Sciatic nerve (tissue), 2 donors: ENCODE measurements at regions of chr9 and their contacts with region 1.

Region 1: GRCh38 chr9:13446938-13447842 is 167.7 kb upstream of the MPDZ start:
- DNase-seq: no peak
- ATAC-seq: no peak

Region 2: DNA sequence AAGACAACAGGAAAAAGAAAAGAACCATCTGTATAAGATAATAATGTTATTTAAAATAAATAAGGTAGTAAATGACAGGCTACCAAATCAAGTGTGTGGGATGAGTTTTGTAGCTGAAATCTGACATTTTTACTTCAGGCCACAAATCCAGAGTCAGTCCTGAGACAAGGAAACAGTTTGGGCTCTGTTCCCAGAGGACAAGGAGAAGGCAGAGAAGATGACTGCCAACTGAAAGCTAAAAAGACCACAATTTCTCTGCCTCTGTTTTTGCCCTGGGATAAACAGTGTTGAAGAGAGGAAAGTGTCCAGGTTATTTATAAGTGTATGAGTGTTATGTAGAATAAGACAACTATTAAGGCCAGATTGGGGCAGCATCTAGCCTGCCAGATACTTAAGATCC is 686.2 kb after region 1 on chr9:
- intact Hi-C with region 1: no loop called
- DNase-seq: no peak
- ATAC-seq: peak; percentile 32

Region 3: DNA sequence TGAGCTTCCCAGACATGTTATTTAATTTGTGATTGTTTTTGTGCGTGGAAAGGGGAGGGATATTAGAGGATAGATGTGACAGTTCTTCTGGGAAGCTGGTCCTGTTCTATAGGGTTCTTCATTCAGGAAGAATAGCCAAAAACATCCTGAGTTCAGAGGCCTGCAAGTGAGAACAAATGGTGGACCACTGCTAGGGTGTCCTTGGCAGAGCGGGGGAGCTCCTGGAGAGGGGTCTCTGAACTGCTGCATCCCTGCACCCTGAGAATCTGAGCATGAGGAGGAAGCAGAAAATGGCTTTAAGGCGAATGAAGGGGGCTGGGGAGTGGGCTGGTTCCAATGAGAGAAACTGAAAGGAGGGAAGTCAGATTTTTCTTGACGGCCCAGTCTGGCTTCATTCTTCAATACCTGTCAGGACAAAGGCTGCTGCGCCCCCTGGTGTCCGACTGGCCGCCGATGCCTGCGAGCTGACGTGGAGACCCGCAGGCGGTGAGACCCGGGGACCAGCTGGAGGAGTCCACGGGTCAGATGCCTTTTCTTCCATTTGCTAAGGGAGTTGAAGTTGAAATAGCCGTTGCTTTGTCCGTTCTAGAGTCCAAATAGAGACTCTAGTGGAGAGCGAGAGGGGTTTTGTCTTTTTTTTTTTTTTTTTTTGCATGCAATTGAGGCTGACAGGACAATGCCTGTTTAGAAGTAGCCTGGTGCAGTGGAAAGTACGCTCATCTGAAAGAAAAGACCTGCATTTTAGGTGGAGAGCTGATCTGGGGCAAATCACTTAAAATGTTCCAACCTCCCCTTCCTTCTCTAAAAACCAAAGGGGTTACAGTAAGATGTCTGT is 906.2 kb after region 1 on chr9:
- intact Hi-C with region 1: loop called (anchors 5 kb)
- DNase-seq: peak; percentile 98
- ATAC-seq: peak; percentile 89